ENCODE measurements at regions of chr12 and their contacts with region 1.

Region 1: DNA sequence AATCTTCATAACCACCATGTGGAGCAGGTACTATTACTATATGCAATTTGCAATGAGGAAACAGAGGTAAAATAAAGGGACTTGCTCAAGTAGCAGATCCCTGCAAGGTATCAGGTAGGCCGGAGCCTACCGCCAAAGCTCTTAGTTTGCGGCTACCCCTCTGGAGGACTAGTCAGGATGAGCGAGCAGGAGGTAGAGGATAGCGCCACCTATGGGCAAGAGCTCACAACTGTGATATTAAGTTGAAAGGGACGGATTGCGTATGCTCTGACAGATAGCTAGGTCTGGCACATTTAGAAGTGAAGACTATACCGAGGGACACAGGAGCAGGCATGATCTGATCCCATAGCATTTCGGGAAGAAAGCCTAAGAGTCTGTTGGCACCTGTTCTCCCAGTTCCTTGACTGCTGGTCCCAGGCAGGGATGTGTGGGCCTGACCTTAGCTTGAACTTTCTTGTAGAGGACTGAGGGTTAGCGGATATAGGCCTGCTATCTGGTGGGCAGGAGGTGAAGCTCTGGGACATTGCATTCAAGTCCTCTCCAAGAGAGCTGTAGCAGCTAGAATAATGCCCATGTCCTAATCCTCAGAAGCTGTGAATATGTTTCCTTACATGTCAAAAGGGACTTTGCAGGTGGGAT is 48.0 kb downstream of the SLC17A8 start:
- DNase-seq: peak; percentile 70

Region 2: GRCh38 chr12:100234598-100235304 is 170.1 kb before region 1 on chr12:
- CTCF ChIA-PET with region 1: interaction called, 13 read pairs
- POLR2A ChIA-PET with region 1: no interaction called
- DNase-seq: peak; percentile 23

Region 3: DNA sequence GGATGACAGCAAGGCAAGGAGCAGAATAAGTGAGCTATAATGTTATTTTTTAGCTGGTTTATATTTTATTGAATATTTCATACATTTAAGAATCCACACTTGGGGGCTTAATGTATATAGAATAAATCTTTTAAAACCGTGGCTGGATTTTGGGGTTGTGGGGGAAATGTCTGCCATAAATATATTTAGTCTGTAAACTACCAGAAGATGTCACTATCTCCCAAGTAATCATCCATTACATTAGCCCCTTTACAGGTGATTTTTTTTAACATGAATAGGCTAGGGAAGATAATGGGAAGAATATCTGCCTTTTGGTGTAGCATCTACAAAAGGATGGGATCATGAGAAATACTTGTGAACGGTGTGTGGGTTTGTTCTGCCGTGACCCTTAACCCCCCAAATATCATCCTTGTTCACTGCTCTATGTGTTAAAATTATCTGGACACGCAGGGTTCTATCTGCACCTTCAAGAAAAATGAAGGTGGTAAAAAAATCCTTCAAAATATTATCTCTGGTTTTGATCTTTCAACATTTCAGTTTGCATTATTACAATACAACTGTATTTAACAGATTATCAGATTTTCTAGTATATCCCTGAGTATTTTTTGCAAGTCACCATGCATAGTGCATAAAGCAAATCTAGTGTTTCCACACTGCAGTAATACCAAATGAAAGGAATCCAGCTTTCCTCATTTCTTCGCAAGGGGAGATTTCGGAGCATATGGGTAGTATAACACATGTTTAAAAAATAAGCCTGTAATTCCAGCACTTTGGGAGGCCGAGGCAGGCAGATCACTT is 56.0 kb before region 1 on chr12:
- CTCF ChIA-PET with region 1: interaction called, 15 read pairs
- POLR2A ChIA-PET with region 1: no interaction called
- DNase-seq: peak; percentile 21

Measured in HEK293T (cell line).